SK-N-SH (cell line): ENCODE measurements at regions of chr22 and their contacts with region 1.

Region 1: GRCh38 chr22:19629720-19630419 is 84.4 kb upstream of the SEPTIN5 start:
- DNase-seq: peak; percentile 95
- H3K4me3 ChIP-seq: peak overlapping the region in 1 of 2 experiments; percentile 57; a peak in 1 of 4 replicates
- H3K27ac ChIP-seq: no peak overlapping the region
- H3K4me1 ChIP-seq: no peaks in the 10 kb centered on the region
- H3K27me3 ChIP-seq: no peaks in the 10 kb centered on the region
- CTCF ChIP-seq: peak; percentile 97
- EP300 ChIP-seq: no peak
- RAD21 ChIP-seq: peak; percentile 98

Region 2: DNA sequence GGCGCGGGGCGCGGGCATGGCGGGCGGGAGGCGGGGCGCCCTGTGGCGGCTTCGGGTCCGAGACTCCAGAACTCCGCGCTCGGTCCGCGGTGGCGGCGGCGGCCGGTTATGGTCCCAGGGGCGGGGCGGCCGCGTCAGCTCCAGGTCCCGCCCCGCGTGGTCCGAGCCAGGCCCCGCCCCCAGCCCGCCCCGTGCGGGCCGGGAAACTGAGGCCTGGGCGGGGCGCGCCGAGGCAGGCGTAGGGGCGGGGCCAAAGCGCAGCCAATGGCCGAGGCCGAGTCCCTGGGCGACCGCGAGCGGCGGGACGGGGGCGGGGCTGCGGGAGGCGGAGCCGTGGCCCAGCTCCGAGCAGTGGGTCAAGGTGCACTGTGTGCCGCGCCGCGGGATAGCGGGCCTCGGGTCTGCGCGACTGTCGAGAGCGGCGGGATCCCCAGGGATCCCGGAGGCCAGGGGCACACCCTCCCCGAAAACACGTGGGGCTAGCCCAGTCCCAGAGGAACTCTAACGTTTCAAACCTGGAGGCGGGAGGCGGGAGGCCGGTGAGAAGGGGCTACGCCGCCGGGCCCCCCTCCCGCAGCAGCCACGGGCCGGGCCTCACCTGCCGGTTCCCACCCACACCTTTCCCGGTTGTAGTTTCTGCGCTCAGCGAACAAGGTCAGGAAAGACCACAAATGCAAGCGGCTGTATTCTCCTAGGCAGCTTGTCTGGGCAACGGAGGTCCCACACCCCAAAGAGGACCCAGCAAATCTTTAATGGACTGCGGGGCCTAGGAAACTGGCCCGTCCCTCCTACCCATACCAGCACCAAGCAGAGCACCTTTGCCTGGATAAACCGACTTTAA is 451.0 kb before region 1 on chr22 and contains the start of gene SLC25A1:
- CTCF ChIA-PET with region 1: interaction called, 19 read pairs
- POLR2A ChIA-PET with region 1: no interaction called
- DNase-seq: peak; percentile 97
- H3K4me3 ChIP-seq: peak within 1 kb of the TSS; percentile 80 to 84
- H3K27ac ChIP-seq: peak within 1 kb of the TSS; percentile 37 to 89; a peak in 3 of 4 replicates
- H3K4me1 ChIP-seq: peaks cover 16 to 44% of the 10 kb centered on the region in 2 experiments; a peak in 3 of 4 replicates
- H3K27me3 ChIP-seq: no peaks in the 10 kb centered on the region
- CTCF ChIP-seq: no peak
- EP300 ChIP-seq: no peak
- RAD21 ChIP-seq: no peak
- polyA plus RNA-seq, gene SLC25A1: 34.2 and 44.7 TPM in 2 replicates

Region 3: DNA sequence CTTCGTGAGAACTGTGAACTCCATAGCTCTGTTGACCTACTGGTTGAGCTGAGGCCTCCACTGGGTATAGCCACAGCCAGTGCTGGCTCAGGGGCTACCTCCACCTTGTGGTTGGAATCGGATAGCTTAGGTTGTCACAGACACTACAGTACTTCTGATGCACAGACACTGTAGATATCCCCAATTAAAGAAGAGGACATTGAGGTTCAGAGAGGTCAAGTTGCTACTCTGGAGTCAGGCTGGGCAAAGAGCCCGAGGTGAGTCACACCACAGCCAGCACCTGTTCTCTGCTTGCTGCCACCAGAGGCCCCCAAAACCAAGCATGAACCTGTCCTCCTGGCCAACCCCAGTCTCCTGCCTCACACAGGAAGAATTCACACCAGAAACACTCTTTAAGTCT is 156.3 kb before region 1 on chr22:
- CTCF ChIA-PET with region 1: interaction called, 17 read pairs
- POLR2A ChIA-PET with region 1: no interaction called
- DNase-seq: no peak
- H3K4me3 ChIP-seq: no peak overlapping the region
- H3K27ac ChIP-seq: no peak overlapping the region
- H3K4me1 ChIP-seq: peaks cover 5 to 8% of the 10 kb centered on the region in 2 experiments; a peak in 3 of 4 replicates
- H3K27me3 ChIP-seq: no peaks in the 10 kb centered on the region
- CTCF ChIP-seq: no peak; the same call in 1 of the 2 replicates
- EP300 ChIP-seq: no peak
- RAD21 ChIP-seq: no peak

Region 4: GRCh38 chr22:19495562-19496323 is 134.1 kb before region 1 on chr22:
- CTCF ChIA-PET with region 1: interaction called, 39 read pairs
- POLR2A ChIA-PET with region 1: no interaction called
- DNase-seq: no peak
- H3K4me3 ChIP-seq: no peak overlapping the region
- H3K27ac ChIP-seq: no peak overlapping the region
- H3K4me1 ChIP-seq: no peaks in the 10 kb centered on the region
- H3K27me3 ChIP-seq: no peaks in the 10 kb centered on the region
- CTCF ChIP-seq: peak; percentile 42
- EP300 ChIP-seq: no peak
- RAD21 ChIP-seq: peak; percentile 45

Region 5: DNA sequence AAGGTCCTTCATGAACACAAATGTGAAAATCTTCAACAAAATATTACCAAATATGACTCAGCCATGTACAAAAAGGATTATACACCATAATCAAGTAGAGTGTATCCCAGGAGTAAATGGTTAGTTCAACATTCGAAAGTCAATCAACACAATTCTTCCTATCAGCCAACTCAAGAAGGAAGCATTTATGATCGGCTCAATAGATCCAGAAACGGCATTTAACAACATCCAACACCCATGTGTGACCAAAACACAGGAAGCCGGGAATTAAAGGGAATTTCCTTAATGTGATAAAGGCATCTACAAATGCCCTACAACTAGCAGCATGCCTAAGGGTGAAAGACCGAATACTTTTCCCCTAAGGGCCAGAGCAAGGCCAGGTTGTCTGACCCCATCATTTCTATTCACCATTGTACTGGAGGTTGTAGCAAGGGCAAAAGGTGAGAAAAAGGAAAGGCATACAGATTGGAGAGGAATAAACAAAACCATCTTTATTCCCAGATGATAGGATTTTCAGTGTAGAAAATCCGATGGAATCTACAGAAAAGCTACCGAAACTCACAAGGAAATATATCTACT is 35.8 kb before region 1 on chr22:
- CTCF ChIA-PET with region 1: interaction called, 12 read pairs
- POLR2A ChIA-PET with region 1: no interaction called
- DNase-seq: no peak
- H3K4me3 ChIP-seq: no peak overlapping the region
- H3K27ac ChIP-seq: no peak overlapping the region
- H3K4me1 ChIP-seq: no peaks in the 10 kb centered on the region; a peak in 1 of 4 replicates
- H3K27me3 ChIP-seq: no peaks in the 10 kb centered on the region
- CTCF ChIP-seq: no peak
- EP300 ChIP-seq: no peak
- RAD21 ChIP-seq: no peak

Region 6: GRCh38 chr22:19641254-19641982 is 11.5 kb after region 1 on chr22:
- CTCF ChIA-PET with region 1: interaction called, 26 read pairs
- POLR2A ChIA-PET with region 1: no interaction called
- DNase-seq: peak; percentile 3
- H3K4me3 ChIP-seq: no peak overlapping the region; a peak in 1 of 4 replicates
- H3K27ac ChIP-seq: no peak overlapping the region
- H3K4me1 ChIP-seq: peaks cover 0 to 3% of the 10 kb centered on the region in 2 experiments; a peak in 1 of 4 replicates
- H3K27me3 ChIP-seq: no peaks in the 10 kb centered on the region; the same call in 1 of the 2 replicates
- CTCF ChIP-seq: no peak
- EP300 ChIP-seq: no peak
- RAD21 ChIP-seq: no peak